ENCODE measurements at regions of chr4 and their contacts with region 1.

Region 1: DNA sequence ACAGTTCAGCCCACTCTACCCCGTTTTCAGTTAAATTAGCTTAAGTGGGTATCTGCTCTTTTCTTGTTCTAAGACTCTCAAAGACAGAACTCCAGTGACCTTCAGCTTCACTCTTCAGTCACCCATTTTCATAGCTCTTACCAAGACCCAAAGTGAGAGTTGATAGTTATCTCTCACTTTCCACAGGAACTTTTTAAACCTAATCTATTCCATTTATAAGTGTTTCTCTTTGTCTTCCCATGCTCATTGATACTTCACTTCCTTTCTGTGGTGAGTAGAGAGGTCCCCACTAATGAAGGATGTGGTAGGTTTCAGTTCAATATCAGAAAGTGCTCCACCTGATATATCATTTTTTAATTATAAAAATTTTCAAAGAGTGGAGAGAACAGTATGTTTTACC is 33.4 kb downstream of the COX18 start:
- DNase-seq: no peak
- ATAC-seq: no peak
- H3K4me3 ChIP-seq: no peak overlapping the region
- H3K27ac ChIP-seq: no peak overlapping the region
- H3K4me1 ChIP-seq: no peaks in the 10 kb centered on the region
- H3K27me3 ChIP-seq: no peaks in the 10 kb centered on the region
- CTCF ChIP-seq: no peak
- EP300 ChIP-seq: no peak
- POLR2A ChIP-seq: no peak
- RAD21 ChIP-seq: no peak

Region 2: GRCh38 chr4:73187325-73187724 is 151.2 kb after region 1 on chr4:
- CTCF ChIA-PET with region 1: no interaction called
- POLR2A ChIA-PET with region 1: no interaction called
- in situ Hi-C with region 1: no loop called
- intact Hi-C with region 1: no loop called
- DNase-seq: peak in 1 of 4 experiments; percentile 12
- ATAC-seq: peak; percentile 83
- H3K4me3 ChIP-seq: no peak overlapping the region
- H3K27ac ChIP-seq: peak overlapping the region; percentile 50; the same call in 1 of the 3 replicates
- H3K4me1 ChIP-seq: no peaks in the 10 kb centered on the region; a peak in 2 of 5 replicates
- H3K27me3 ChIP-seq: no peaks in the 10 kb centered on the region
- CTCF ChIP-seq: no peak; a peak in 1 of 6 replicates
- EP300 ChIP-seq: no peak
- POLR2A ChIP-seq: no peak
- RAD21 ChIP-seq: no peak

Region 3: DNA sequence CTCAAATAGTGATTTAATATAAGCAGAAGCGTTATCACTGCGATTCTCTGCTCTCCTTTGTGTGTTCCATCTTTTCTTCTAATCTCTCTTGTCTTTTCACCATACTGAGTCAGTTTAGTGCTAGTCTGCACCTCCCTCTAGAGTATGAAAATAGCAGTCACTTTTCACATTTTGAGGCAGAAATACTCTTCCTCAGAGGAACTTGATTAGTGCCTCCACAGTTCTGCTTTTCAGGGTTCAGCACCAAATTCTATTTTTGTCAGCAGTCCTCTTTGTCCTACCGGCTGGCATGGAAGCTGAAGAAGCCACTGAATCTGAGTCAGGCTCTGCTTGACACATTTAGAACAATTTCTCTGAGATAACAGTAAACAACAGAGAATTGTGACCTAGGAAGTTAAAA is 272.2 kb after region 1 on chr4:
- CTCF ChIA-PET with region 1: interaction called, 3 read pairs
- POLR2A ChIA-PET with region 1: no interaction called
- in situ Hi-C with region 1: no loop called
- intact Hi-C with region 1: loop called (anchors 5 kb)
- DNase-seq: peak in 1 of 4 experiments; percentile 35
- ATAC-seq: peak; percentile 78
- H3K4me3 ChIP-seq: no peak overlapping the region
- H3K27ac ChIP-seq: no peak overlapping the region
- H3K4me1 ChIP-seq: no peaks in the 10 kb centered on the region
- H3K27me3 ChIP-seq: no peaks in the 10 kb centered on the region
- CTCF ChIP-seq: peak; percentile 44 to 56 (median 49); a peak in 5 of 6 replicates
- EP300 ChIP-seq: no peak
- POLR2A ChIP-seq: no peak
- RAD21 ChIP-seq: peak; percentile 31 to 63; a peak in 3 of 4 replicates